Naive thymus-derived CD8-positive, alpha-beta T cell (primary cell): ENCODE measurements at regions of chr16 and their contacts with region 1.

Region 1: GRCh38 chr16:1971796-1972489 is at the start of gene TBL3:
- DNase-seq: peak; percentile 93 to 98 (median 96)
- ATAC-seq: peak; percentile 96 to 98
- H3K4me3 Mint-ChIP-seq: peak within 1 kb of the TSS; percentile 89 to 100 (median 97)
- H3K27ac Mint-ChIP-seq: peak within 1 kb of the TSS; percentile 96 to 100 (median 99)
- H3K4me1 Mint-ChIP-seq: peaks cover 17 to 30% (median 23%) of the 10 kb centered on the region in 4 donors
- H3K27me3 Mint-ChIP-seq: peaks cover 0 to 5% (median 0%) of the 10 kb centered on the region in 5 donors
- polyA plus RNA-seq, gene TBL3: 44.6 to 61.8 (median 52.2) TPM

Region 2: DNA sequence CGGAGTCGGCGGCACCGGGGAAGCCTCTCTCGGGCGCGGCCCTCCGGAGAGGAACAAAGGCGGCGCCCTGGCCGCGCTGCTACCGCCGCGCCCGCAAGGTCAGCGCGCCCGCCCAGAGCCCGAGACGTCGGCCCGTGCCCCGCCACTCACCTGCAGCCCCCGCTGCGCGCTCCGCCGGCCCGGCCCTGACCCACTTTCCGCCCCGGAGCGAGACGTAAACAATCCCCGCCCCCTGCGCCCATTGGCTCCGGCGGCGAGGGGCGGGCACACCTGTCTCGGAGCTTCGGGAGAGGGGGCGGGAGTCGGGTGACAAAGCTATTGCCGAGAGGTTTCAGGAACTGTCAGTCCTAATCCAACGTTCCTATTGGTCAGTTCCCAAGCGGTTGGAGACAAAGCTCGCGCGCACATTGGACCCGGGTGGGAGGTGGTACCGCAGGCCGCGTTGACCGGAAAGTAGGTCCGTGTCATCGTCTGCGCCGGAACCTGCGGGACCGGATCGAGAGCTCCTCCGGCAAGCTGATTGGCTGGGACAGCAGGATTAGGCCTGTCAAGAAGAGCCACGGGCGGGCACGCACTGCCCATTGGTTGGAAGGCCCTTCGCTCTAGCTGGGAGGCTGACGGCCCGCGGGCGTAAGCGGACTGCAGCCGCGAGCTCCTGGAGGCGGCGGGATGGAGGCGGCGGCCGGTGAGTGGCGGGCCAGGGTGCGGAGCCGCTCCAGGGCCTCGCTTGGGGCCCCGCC is 189.4 kb before region 1 on chr16 and contains the starts of genes NUBP2 and SPSB3:
- POLR2A ChIA-PET with region 1: interaction called, 12 read pairs
- DNase-seq: peak; percentile 90 to 99 (median 97)
- ATAC-seq: peak; percentile 86 to 87
- H3K4me3 Mint-ChIP-seq: peak within 1 kb of the TSS; percentile 83 to 97 (median 93)
- H3K27ac Mint-ChIP-seq: peak within 1 kb of the TSS; percentile 82 to 99 (median 93)
- H3K4me1 Mint-ChIP-seq: peaks cover 8 to 52% (median 27%) of the 10 kb centered on the region in 4 donors
- H3K27me3 Mint-ChIP-seq: no peaks in the 10 kb centered on the region
- polyA plus RNA-seq, gene NUBP2: 87.2 to 90.6 (median 87.3) TPM
- polyA plus RNA-seq, gene SPSB3: 38.0 to 42.0 (median 40.8) TPM

Region 3: GRCh38 chr16:1959269-1960049 is 12.5 kb before region 1 on chr16 and contains the start of gene NDUFB10:
- POLR2A ChIA-PET with region 1: interaction called, 39 read pairs
- DNase-seq: peak; percentile 80 to 93 (median 90)
- ATAC-seq: peak; percentile 86 to 87
- H3K4me3 Mint-ChIP-seq: peak within 1 kb of the TSS; percentile 88 to 94 (median 91)
- H3K27ac Mint-ChIP-seq: peak within 1 kb of the TSS; percentile 75 to 96 (median 90)
- H3K4me1 Mint-ChIP-seq: peaks cover 20 to 48% (median 41%) of the 10 kb centered on the region in 4 donors
- H3K27me3 Mint-ChIP-seq: peaks cover 0 to 2% (median 0%) of the 10 kb centered on the region in 5 donors
- polyA plus RNA-seq, gene NDUFB10: 180 to 217 (median 187) TPM

Region 4: DNA sequence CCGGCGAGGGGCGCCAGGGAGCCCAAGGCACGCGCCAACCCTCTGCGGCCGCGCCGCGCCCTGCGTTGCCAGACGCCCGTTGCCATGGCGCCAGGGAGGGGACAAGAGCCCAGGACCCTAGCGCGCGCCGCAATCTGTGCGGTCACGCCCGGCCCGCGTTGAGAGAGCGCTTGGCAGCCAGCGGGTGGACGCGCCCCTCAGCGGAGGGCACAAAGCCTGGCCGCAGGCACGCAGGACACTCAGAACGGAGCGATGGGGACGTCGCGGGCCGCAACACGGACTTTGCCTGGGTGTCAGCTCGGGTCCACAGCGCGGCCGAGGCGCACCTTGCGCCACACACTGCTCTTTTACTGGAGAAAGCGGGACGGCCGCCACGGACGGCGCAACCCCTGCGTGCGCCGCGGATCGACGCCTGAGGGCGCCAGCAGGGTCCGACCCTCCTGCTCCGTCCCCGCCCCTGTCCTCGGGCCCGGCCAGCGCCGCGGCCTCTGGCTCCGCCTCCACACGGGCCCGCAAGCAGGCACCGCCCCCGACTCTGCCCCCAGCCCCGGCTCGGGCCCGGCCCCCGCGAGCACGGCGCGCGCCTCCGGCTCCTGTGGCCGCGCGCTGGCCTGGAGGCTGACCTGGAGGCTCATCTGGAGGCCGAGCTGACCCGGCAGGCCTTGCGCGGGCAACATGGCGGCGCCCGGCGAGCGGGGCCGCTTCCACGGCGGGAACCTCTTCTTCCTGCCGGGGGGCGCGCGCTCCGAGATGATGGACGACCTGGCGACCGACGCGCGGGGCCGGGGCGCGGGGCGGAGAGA is 11.8 kb after region 1 on chr16 and contains the start of gene GFER:
- POLR2A ChIA-PET with region 1: interaction called, 47 read pairs
- DNase-seq: peak in 8 of 10 donors; percentile 48 to 75 (median 56)
- ATAC-seq: peak; percentile 62 to 74
- H3K4me3 Mint-ChIP-seq: peak within 1 kb of the TSS; percentile 74 to 89 (median 79)
- H3K27ac Mint-ChIP-seq: peak within 1 kb of the TSS; percentile 10 to 83 (median 74)
- H3K4me1 Mint-ChIP-seq: peaks cover 7 to 21% (median 16%) of the 10 kb centered on the region in 4 donors
- H3K27me3 Mint-ChIP-seq: peaks cover 1 to 38% (median 10%) of the 10 kb centered on the region in 5 donors
- polyA plus RNA-seq, gene GFER: 21.4 to 30.0 (median 26.3) TPM

Region 5: GRCh38 chr16:1991948-1992703 is 20.2 kb after region 1 on chr16:
- POLR2A ChIA-PET with region 1: interaction called, 47 read pairs
- DNase-seq: peak; percentile 86 to 100 (median 95)
- ATAC-seq: peak; percentile 72 to 82
- H3K4me3 Mint-ChIP-seq: peak overlapping the region in 9 of 10 donors; percentile 15 to 84 (median 71)
- H3K27ac Mint-ChIP-seq: peak overlapping the region in 6 of 10 donors; percentile 24 to 83 (median 72)
- H3K4me1 Mint-ChIP-seq: peaks cover 9 to 27% (median 18%) of the 10 kb centered on the region in 4 donors
- H3K27me3 Mint-ChIP-seq: peaks cover 2 to 27% (median 7%) of the 10 kb centered on the region in 5 donors

Region 6: GRCh38 chr16:2047330-2048115 is 75.6 kb after region 1 on chr16 and contains the starts of genes NTHL1 and TSC2:
- POLR2A ChIA-PET with region 1: interaction called, 11 read pairs
- DNase-seq: peak; percentile 83 to 95 (median 89)
- ATAC-seq: peak; percentile 92 to 97
- H3K4me3 Mint-ChIP-seq: peak within 1 kb of the TSS; percentile 85 to 96 (median 93)
- H3K27ac Mint-ChIP-seq: peak within 1 kb of the TSS; percentile 41 to 91 (median 78)
- H3K4me1 Mint-ChIP-seq: peaks cover 9 to 30% (median 21%) of the 10 kb centered on the region in 4 donors
- H3K27me3 Mint-ChIP-seq: no peaks in the 10 kb centered on the region
- polyA plus RNA-seq, gene NTHL1: 13.1 to 20.0 (median 16.6) TPM
- polyA plus RNA-seq, gene TSC2: 23.5 to 42.0 (median 27.2) TPM